AG04450 (cell line): ENCODE measurements at regions of chr7 and their contacts with region 1.

Region 1: DNA sequence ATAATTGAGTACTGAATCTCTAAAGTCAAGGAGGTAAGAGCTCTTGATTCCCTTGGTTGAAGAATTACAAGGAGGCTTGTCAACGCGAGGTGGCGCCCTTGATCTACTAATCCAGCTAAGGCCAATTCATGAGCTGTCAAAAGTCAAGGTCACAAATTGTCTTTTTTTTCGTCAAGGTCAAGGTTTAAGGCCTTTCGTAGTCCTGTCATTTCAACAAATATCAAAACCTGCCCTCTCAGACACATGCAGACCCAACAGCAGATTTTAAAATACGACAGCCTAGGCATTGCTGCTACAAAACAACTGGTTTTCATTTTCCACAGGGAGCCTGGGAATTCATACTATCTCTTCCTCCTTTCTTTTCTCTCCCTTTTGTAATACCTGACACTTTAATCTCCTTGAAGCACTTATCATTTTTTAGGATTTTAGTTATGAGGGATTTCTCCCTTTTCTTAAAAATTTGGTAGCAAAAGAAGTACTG is 3.6 kb downstream of the HOXA13 start:
- DNase-seq: peak; percentile 37
- H3K4me3 ChIP-seq: no peak overlapping the region
- H3K27ac ChIP-seq: no peak overlapping the region
- H3K27me3 ChIP-seq: peaks cover 83% of the 10 kb centered on the region
- CTCF ChIP-seq: peak; percentile 80

Region 2: DNA sequence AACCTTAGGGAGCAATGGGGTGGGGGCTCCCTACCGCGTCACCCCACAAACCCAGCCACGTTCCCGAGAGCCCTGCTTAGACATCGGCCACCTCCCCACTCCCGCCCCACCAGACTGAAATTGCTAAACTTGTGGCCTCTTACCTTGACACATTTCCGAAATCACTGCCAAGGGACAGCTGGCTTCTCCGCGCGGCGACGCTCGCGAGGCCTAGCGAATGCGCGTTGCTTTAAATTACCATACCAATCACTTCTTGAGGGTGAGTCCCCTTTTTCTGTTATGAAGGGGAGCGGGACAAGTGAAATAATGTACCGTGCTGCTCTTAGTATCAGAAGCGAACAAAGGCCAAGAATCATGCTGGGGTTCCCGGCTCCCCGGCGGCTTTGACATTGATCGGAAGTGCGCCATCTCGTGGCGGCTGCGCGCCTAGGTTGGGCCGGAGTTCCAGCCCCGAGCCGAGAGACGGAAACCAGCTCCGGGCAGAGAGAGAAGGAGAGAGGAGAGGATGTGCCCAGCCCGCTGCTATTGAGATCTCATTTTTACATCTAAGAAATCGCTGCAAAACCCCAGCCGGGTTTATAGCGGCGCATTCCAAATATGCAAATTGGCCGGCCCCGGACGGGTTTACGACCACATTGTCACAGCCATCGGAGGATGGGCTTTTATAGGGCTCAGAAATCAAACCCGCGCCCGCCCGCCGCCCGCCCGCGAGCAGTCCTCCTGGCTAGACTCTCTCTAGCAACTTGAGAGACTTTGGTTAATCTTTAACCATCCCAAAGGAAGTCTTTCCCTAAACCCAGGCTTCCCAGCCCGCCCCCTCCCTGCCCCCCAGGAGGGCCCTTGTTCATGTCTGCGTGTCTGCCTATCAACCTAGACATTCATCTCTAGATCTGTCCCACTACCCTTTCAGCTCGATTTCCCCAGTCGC is 16.6 kb before region 1 on chr7:
- CTCF ChIA-PET with region 1: interaction called, 16 read pairs
- POLR2A ChIA-PET with region 1: interaction called, 4 read pairs
- DNase-seq: no peak
- H3K4me3 ChIP-seq: peak overlapping the region; percentile 32
- H3K27ac ChIP-seq: no peak overlapping the region
- H3K27me3 ChIP-seq: peaks cover 92% of the 10 kb centered on the region
- CTCF ChIP-seq: peak; percentile 90

Region 3: DNA sequence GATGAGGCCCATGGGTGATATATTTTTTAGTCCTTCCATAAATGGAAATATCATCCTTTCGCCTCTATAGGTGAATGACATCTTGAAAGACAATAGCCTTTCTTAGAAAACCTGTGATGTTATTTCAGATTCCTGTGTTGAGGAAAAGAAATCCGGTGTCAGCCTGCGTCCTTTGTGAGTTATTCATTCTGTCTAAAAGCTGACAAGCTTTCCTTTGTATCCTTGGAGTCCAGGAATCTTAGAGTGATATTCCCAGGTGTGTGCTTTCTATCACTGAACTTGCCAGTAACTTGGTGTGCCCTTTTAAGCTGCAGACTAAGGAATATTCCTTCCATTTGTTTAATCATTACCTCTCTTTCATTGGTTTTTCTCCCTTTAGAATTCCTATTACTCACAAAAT is 87.2 kb after region 1 on chr7:
- CTCF ChIA-PET with region 1: no interaction called
- POLR2A ChIA-PET with region 1: no interaction called
- DNase-seq: no peak
- H3K4me3 ChIP-seq: no peak overlapping the region
- H3K27ac ChIP-seq: no peak overlapping the region
- H3K27me3 ChIP-seq: no peaks in the 10 kb centered on the region
- CTCF ChIP-seq: no peak

Region 4: GRCh38 chr7:27576360-27576944 is 380.1 kb after region 1 on chr7:
- CTCF ChIA-PET with region 1: interaction called, 36 read pairs
- POLR2A ChIA-PET with region 1: no interaction called
- DNase-seq: peak; percentile 3
- H3K4me3 ChIP-seq: no peak overlapping the region
- H3K27ac ChIP-seq: no peak overlapping the region
- H3K27me3 ChIP-seq: no peaks in the 10 kb centered on the region
- CTCF ChIP-seq: peak; percentile 58

Region 5: GRCh38 chr7:27774717-27775328 is 578.5 kb after region 1 on chr7:
- CTCF ChIA-PET with region 1: interaction called, 47 read pairs
- POLR2A ChIA-PET with region 1: no interaction called
- DNase-seq: no peak
- H3K4me3 ChIP-seq: no peak overlapping the region
- H3K27ac ChIP-seq: no peak overlapping the region
- H3K27me3 ChIP-seq: no peaks in the 10 kb centered on the region
- CTCF ChIP-seq: peak; percentile 63

Region 6: GRCh38 chr7:27921081-27921836 is 724.9 kb after region 1 on chr7:
- CTCF ChIA-PET with region 1: interaction called, 68 read pairs
- POLR2A ChIA-PET with region 1: no interaction called
- DNase-seq: peak; percentile 76
- H3K4me3 ChIP-seq: no peak overlapping the region
- H3K27ac ChIP-seq: no peak overlapping the region
- H3K27me3 ChIP-seq: no peaks in the 10 kb centered on the region
- CTCF ChIP-seq: peak; percentile 60

Region 7: DNA sequence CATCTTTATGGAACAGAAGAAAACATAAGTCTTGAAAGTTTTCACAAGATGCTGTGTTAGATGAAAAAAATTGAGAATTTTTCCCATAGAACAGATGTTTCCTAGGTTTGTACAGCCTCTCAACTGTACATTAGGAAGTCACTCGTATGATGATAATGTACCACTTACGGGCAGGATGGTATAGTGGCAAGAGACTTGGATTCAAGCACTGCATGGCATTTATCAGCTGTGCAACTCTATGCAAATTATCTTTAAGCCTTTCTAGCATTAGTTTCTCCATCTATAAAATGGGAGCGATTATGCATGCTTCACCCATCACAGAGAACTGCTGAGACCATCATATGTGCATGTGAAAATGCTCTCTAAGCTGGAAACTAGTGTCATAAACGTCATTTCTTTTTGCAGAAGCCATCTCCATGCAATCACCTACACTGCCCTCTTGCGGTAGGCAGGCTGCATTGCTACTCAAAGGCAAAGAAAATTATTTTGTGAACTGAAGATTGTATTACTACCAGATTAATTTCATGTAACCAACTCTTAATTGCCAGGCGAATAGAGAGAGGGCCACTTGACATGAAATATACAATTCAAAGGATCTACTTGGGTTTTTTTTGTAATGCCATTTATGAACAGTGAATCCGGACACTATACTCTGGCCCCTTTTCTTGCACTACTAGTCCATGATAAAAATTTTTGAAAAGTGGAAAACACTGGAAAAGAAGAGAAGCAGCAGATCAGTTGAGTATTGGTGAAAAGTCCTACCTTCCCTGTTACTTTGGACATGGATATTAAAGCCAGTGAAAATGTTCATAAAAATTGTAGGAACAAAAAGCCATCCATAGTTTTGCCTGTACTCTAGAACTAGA is 881.9 kb after region 1 on chr7:
- CTCF ChIA-PET with region 1: interaction called, 28 read pairs
- POLR2A ChIA-PET with region 1: no interaction called
- DNase-seq: no peak
- H3K4me3 ChIP-seq: no peak overlapping the region
- H3K27ac ChIP-seq: no peak overlapping the region
- H3K27me3 ChIP-seq: no peaks in the 10 kb centered on the region
- CTCF ChIP-seq: peak; percentile 99